Kidney (tissue), 22 donors: ENCODE measurements at regions of chr18 and their contacts with region 1.

Region 1: GRCh38 chr18:60534538-60534937 is 162.0 kb upstream of the MC4R start:
- DNase-seq: no peak
- H3K4me3 ChIP-seq: no peak overlapping the region
- H3K27ac ChIP-seq: no peak overlapping the region
- H3K4me1 ChIP-seq: no peaks in the 10 kb centered on the region
- H3K27me3 ChIP-seq: no peaks in the 10 kb centered on the region
- CTCF ChIP-seq: no peak

Region 2: DNA sequence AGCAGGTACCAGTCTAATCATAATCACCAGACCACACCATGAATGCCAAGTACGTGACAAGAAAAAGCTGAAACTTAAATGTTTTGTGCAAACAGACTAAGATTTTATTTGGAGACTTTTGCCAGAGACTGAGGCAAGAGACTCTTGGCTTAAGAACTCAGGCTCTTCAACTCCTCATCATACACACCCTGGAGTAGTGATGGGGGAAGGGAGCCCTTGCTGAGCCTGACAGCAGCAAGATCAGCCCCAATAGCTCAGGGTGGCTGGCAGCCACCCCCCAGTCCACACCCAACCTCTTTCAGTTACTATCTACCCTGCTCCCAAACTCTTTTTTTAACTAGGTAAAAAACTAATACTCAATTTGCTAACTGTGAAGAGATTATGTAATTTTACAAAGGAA is 952.1 kb before region 1 on chr18:
- intact Hi-C with region 1: no loop called
- DNase-seq: no peak
- H3K4me3 ChIP-seq: no peak overlapping the region
- H3K27ac ChIP-seq: no peak overlapping the region
- H3K4me1 ChIP-seq: no peaks in the 10 kb centered on the region
- H3K27me3 ChIP-seq: no peaks in the 10 kb centered on the region
- CTCF ChIP-seq: no peak

Region 3: GRCh38 chr18:59996370-59996966 is 538.1 kb before region 1 on chr18:
- intact Hi-C with region 1: loop called (anchors 10 kb)
- DNase-seq: peak in 3 of 5 donors; percentile 33 to 45 (median 34)
- H3K4me3 ChIP-seq: no peak overlapping the region
- H3K27ac ChIP-seq: no peak overlapping the region
- H3K4me1 ChIP-seq: no peaks in the 10 kb centered on the region
- H3K27me3 ChIP-seq: no peaks in the 10 kb centered on the region
- CTCF ChIP-seq: peak; percentile 31

Region 4: DNA sequence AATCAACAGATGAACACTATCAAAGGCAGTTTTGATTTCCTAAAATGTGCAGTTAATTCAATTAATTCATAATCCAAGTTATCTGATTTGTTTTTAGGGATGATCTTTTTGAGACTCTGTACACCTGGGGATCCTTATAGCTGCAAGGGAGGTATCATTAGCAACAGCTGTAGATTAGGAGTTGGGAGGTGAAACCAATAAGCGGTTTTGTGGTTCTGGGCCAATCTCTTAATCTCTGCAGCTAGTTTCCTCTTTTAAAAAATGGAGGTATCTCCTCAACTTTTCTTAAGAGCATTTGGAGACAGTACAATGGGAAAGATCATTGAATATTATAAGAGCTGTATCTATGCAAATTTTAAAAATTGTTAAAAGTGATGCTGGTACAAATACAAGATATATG is 287.9 kb before region 1 on chr18:
- intact Hi-C with region 1: no loop called
- DNase-seq: no peak
- H3K4me3 ChIP-seq: no peak overlapping the region
- H3K27ac ChIP-seq: no peak overlapping the region
- H3K4me1 ChIP-seq: no peaks in the 10 kb centered on the region
- H3K27me3 ChIP-seq: no peaks in the 10 kb centered on the region
- CTCF ChIP-seq: no peak

Region 5: DNA sequence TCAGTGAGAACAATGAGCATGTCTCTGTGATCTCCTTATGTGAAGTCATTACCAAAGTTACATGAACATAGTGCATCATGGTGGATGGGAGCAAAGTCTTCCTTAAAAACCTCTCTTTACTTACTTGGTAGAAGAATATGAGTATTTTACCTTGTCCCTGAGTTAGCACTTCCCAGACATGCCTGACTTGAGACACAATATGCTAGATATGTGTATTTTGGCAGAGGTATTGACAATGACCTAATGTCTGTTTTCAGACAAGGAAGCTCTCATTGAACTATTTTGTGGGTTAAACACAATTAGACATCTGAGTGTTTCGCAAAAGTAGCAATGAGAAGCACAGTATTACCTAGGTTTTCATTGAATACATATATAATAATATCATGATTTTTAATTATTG is 62.9 kb before region 1 on chr18:
- intact Hi-C with region 1: no loop called
- DNase-seq: no peak
- H3K4me3 ChIP-seq: no peak overlapping the region
- H3K27ac ChIP-seq: no peak overlapping the region
- H3K4me1 ChIP-seq: no peaks in the 10 kb centered on the region
- H3K27me3 ChIP-seq: no peaks in the 10 kb centered on the region
- CTCF ChIP-seq: no peak